ENCODE measurements at regions of chr5 and their contacts with region 1.

Region 1: DNA sequence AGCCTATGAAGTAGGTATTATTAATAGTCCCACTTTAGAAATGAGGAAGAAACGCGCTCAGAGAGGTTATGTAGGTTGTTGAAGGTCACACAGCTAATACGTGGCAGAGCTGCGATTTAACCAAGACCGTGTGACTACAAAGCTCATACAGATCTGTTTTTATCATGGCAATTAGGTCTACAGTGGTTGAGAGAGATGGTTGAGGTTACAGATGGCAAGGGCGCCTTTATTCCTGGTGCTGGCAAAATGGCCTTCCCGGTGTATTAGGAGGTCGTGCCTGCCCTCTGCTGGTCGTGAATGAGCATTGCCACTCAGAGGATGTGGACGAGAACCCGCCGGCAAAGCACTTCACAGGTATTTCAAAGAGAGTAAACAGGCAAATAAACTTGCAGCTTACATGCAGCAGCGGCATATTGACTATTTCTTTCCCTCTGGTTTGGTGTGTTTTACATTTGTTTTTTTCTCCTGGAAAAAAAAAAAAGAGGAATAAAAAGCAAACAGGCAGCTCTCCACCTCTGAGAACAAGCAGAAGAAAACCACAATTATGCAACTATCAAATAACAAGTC is 65.3 kb upstream of the EGFLAM start:
- DNase-seq: peak; percentile 24 to 64
- ATAC-seq: peak; percentile 38 to 84 (median 62)
- H3K4me3 ChIP-seq: no peak overlapping the region
- H3K4me3 Mint-ChIP-seq: no peak overlapping the region
- H3K27ac ChIP-seq: no peak overlapping the region
- H3K27ac Mint-ChIP-seq: no peak overlapping the region
- H3K4me1 ChIP-seq: no peaks in the 10 kb centered on the region
- H3K4me1 Mint-ChIP-seq: peaks cover 0 to 6% of the 10 kb centered on the region in 2 donors
- H3K27me3 ChIP-seq: no peaks in the 10 kb centered on the region
- H3K27me3 Mint-ChIP-seq: peaks cover 15 to 39% of the 10 kb centered on the region in 2 donors
- CTCF ChIP-seq: peak; percentile 67

Region 2: DNA sequence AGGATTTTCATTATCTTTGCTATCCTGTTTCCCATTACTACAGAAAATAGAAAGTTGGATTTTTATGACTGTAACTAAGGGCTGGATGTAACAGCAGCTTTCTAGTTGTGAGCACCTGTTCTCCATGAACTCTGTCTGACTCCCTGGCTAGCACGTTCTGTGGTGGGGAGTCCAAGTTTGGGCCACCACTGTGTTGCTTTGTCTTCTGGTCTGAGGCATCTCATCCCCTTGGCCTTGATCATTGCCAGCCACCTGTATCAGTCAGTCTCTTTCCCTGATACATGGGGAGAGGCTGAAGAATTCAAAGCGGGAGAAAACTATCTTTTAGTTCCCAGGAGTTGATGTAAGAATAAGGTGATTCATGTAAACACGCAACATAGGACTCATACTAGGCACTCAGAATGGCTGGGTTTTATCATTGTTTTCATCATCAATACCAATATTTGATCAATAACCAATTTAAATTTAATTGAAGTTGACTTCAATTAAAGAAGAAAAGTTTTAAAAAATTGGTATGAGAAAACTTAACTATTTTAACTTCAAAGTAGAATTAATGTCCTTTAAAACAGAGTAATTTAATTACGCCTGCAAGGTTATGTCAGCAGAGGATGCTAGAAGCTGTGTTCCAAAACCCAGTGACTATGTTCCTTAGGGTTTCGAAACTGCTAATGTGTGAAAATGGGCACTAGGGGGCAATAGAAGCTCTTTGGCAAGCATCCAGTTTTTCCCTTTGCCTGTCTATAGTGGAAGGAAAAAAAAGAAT is 780.4 kb before region 1 on chr5:
- intact Hi-C with region 1: loop called (anchors 5 kb)
- DNase-seq: peak in 1 of 2 donors; percentile 71
- ATAC-seq: peak; percentile 50 to 60 (median 58)
- H3K4me3 ChIP-seq: no peak overlapping the region
- H3K4me3 Mint-ChIP-seq: no peak overlapping the region
- H3K27ac ChIP-seq: no peak overlapping the region
- H3K27ac Mint-ChIP-seq: no peak overlapping the region
- H3K4me1 ChIP-seq: no peaks in the 10 kb centered on the region
- H3K4me1 Mint-ChIP-seq: no peaks in the 10 kb centered on the region
- H3K27me3 ChIP-seq: no peaks in the 10 kb centered on the region
- H3K27me3 Mint-ChIP-seq: no peaks in the 10 kb centered on the region
- CTCF ChIP-seq: peak; percentile 68

Region 3: DNA sequence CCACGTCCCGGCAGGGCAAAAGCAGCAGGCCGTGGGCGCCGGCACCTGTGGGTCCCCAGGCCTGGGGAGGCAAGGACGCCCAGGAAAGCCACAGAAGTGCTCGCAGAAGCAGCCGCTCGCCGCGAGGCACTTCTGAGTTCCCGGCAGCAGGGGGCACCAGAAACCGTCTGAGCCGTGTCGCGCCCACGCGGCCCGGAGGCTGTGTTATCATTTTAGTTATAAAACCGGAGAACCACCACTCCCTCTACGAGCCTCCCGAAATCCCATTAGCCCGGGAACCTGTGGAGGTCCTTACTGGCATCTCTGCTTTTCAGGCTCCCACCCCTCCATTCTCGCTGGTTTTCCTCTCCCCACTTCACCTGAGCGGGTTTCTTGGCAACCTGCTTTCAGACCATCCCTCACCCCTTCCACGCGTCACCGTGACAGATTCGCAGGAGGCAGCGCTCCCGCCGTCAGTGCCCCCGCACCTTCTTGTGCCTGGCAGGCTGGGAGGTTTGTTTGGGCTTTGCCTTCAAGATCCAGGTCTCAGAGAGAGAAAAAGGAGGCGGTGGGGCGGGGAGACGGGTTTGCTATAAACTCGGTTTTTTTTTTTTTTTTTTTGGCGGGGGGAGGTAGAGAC is 355.6 kb before region 1 on chr5:
- intact Hi-C with region 1: loop called (anchors 5 kb)
- DNase-seq: peak in 1 of 2 donors; percentile 34
- ATAC-seq: peak in 1 of 3 donors; percentile 66
- H3K4me3 ChIP-seq: no peak overlapping the region
- H3K4me3 Mint-ChIP-seq: peak overlapping the region; percentile 49
- H3K27ac ChIP-seq: no peak overlapping the region
- H3K27ac Mint-ChIP-seq: no peak overlapping the region
- H3K4me1 ChIP-seq: peaks cover 22% of the 10 kb centered on the region
- H3K4me1 Mint-ChIP-seq: peaks cover 5 to 8% of the 10 kb centered on the region in 2 donors
- H3K27me3 ChIP-seq: peaks cover 49% of the 10 kb centered on the region
- H3K27me3 Mint-ChIP-seq: peaks cover 59 to 77% of the 10 kb centered on the region in 2 donors
- CTCF ChIP-seq: no peak